WTC11 (cell line): ENCODE measurements at regions of chr6 and their contacts with region 1.

Region 1: GRCh38 chr6:88629838-88630494 is 333.5 kb downstream of the RNGTT start:
- DNase-seq: peak; percentile 49
- ATAC-seq: peak; percentile 99
- H3K4me3 Mint-ChIP-seq: no peak overlapping the region
- H3K27ac Mint-ChIP-seq: no peak overlapping the region
- H3K4me1 Mint-ChIP-seq: peaks cover 9% of the 10 kb centered on the region
- H3K27me3 Mint-ChIP-seq: no peaks in the 10 kb centered on the region
- CTCF ChIP-seq: no peak

Region 2: DNA sequence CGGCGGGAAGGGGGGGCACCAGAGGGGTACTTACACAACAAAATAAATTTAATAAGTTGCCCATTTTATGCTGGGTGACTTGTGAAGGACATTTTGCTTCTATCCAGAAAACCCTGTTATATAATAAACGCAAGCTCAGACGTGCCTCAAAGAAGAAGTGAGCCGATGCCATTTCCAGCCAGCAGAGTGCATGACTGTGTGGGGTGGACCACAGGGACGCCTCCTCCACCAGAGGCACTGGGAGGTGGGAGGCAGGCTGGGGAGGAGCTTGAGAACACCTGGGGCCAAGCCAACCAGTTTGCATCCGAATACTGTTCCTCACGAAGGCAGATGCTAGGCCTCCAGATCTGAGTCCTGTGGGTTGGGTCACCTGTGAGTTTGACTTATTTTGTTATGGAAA is 30.4 kb before region 1 on chr6:
- CTCF ChIA-PET with region 1: interaction called, 12 read pairs
- POLR2A ChIA-PET with region 1: no interaction called
- DNase-seq: peak; percentile 45
- ATAC-seq: peak; percentile 98
- H3K4me3 Mint-ChIP-seq: no peak overlapping the region
- H3K27ac Mint-ChIP-seq: no peak overlapping the region
- H3K4me1 Mint-ChIP-seq: peaks cover 22% of the 10 kb centered on the region
- H3K27me3 Mint-ChIP-seq: no peaks in the 10 kb centered on the region
- CTCF ChIP-seq: no peak